Transverse colon (tissue), 4 donors: ENCODE measurements at regions of chr15 and their contacts with region 1.

Region 1: GRCh38 chr15:89912674-89913396 is at the start of gene ARPIN:
- DNase-seq: peak; percentile 62
- H3K4me3 ChIP-seq: peak within 1 kb of the TSS; percentile 49 to 88 (median 74)
- H3K27ac ChIP-seq: peak within 1 kb of the TSS; percentile 92 to 93 (median 93)
- H3K4me1 ChIP-seq: peaks cover 8 to 27% (median 11%) of the 10 kb centered on the region in 4 donors
- H3K27me3 ChIP-seq: no peaks in the 10 kb centered on the region
- CTCF ChIP-seq: peak in 1 of 5 experiments; percentile 24
- EP300 ChIP-seq: no peak
- POLR2A ChIP-seq: no peak
- total RNA-seq, gene ARPIN: 24.1 to 48.6 (median 37.6) TPM

Region 2: DNA sequence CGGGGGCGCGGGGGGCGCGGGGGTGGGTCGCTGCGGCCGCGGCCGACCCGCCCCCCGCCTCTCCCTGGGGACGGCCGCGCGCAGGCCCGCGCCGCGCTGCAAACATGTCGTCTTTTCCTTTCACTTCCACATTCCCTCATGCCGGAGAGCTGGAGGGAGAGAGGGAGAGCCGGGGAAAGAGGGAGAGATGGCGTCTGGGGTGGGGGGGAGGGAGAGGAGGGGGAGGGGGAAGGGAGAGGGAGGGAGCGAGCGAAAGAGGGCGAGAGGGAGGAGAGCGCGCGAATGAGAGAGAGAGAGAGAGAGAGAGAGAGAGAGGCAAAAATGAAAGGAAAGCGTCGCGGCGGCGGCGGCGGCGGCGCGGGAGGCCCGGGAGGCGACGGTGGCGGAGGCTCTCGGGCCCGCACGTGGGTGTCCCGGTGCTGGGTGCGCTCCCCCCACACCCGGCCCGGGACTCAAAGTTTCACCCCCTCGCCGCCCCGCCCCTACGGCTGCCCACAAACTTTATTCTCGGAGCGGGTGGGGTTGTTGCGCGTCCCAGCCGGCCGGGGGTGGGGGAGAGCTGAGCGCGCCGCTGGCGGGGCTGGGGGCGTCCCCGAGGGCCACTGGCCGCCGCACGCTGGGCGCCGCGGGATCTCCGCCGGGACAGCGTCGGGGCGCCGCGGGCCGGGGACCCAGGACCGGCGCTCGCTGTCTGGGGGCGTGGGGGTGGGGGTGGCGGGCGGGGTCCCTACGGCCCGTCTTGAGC is 89.0 kb after region 1 on chr15:
- in situ Hi-C with region 1: no loop called
- intact Hi-C with region 1: loop called (anchors 5 kb)
- DNase-seq: peak; percentile 80
- H3K4me3 ChIP-seq: peak overlapping the region; percentile 72 to 95 (median 90)
- H3K27ac ChIP-seq: peak overlapping the region; percentile 91 to 96 (median 94)
- H3K4me1 ChIP-seq: peaks cover 32 to 74% (median 59%) of the 10 kb centered on the region in 4 donors
- H3K27me3 ChIP-seq: no peaks in the 10 kb centered on the region
- CTCF ChIP-seq: no peak
- EP300 ChIP-seq: no peak
- POLR2A ChIP-seq: peak; percentile 31

Region 3: GRCh38 chr15:90059208-90059985 is 146.6 kb after region 1 on chr15:
- in situ Hi-C with region 1: no loop called
- intact Hi-C with region 1: loop called (anchors 5 kb)
- DNase-seq: peak; percentile 88
- H3K4me3 ChIP-seq: no peak overlapping the region
- H3K27ac ChIP-seq: peak overlapping the region; percentile 80 to 86 (median 83)
- H3K4me1 ChIP-seq: peaks cover 34 to 62% (median 43%) of the 10 kb centered on the region in 4 donors
- H3K27me3 ChIP-seq: no peaks in the 10 kb centered on the region
- CTCF ChIP-seq: no peak
- EP300 ChIP-seq: no peak
- POLR2A ChIP-seq: peak; percentile 42